ENCODE measurements at regions of chr7 and their contacts with region 1.

Region 1: DNA sequence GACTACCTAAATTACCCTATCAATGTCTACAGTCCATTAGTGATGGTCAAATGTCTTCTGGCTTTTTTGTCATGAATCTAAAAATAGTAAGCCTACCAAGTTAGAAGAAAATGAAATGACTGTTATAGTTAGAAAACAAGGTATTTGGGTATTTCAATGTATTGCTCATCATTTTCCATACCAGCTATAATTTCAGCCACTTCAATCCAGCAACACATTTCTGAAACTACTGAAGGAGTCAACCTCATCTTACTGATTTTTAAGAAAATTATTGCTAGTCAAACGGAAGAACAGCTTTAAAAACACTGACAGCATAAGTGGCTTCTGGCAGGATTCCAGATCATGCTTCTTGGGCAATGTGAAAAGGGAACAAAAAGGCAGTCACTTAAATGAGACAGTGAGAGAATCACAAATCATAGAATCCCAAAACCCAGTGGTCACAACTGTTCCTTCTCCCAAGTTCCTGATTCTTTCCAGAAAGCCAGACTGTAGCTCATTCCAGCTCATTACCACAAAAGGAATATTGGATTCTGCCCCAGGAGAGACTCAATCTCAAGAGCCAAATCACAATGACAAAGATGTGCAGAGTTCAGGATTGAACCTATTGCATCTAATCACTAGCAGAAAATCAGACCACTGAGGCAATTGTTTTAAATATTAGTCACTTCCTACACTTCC is 61.2 kb upstream of the LRRN3 start:
- DNase-seq: no peak
- H3K4me3 Mint-ChIP-seq: peak overlapping the region; percentile 63
- H3K27ac Mint-ChIP-seq: peak overlapping the region; percentile 88
- H3K4me1 Mint-ChIP-seq: peaks cover 53% of the 10 kb centered on the region
- H3K27me3 Mint-ChIP-seq: no peaks in the 10 kb centered on the region

Region 2: GRCh38 chr7:110774063-110774462 is 255.7 kb before region 1 on chr7:
- intact Hi-C with region 1: loop called (anchors 10 kb)
- DNase-seq: no peak
- H3K4me3 Mint-ChIP-seq: no peak overlapping the region
- H3K27ac Mint-ChIP-seq: no peak overlapping the region
- H3K4me1 Mint-ChIP-seq: peaks cover 8% of the 10 kb centered on the region
- H3K27me3 Mint-ChIP-seq: no peaks in the 10 kb centered on the region

Region 3: DNA sequence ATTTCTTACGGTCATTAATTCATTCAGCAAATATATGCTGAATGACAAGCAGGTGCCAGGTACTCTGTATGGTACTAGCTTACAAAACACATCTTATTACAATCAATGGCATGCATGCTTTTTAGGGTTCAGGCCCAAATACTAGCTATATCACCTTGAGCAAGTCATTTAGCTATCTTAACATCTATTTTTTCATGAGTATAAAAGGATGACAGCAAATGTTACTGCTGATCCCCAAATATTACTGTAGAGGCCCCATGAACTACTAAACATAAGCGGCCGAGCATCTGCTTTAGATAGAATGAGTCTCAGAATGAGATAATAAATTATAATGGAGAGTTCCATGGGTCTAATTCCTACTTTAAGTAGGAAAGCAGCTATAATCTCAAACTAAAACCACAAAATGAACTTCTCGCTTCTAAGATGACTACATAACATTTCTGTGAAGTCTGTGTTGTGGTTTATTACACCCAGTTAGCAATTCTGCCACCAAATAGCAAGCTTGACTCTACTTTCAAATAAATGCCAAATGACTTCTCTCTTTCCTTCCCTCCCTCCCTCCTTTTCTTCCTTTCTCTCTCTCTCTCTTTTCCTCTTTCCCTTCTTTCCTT is 52.5 kb before region 1 on chr7:
- intact Hi-C with region 1: loop called (anchors 1 kb)
- DNase-seq: no peak
- H3K4me3 Mint-ChIP-seq: no peak overlapping the region
- H3K27ac Mint-ChIP-seq: peak overlapping the region; percentile 24
- H3K4me1 Mint-ChIP-seq: peaks cover 37% of the 10 kb centered on the region
- H3K27me3 Mint-ChIP-seq: no peaks in the 10 kb centered on the region

Region 4: GRCh38 chr7:111041577-111041976 is 11.9 kb after region 1 on chr7:
- intact Hi-C with region 1: loop called (anchors 1 kb)
- DNase-seq: no peak
- H3K4me3 Mint-ChIP-seq: no peak overlapping the region
- H3K27ac Mint-ChIP-seq: peak overlapping the region; percentile 14
- H3K4me1 Mint-ChIP-seq: peaks cover 26% of the 10 kb centered on the region
- H3K27me3 Mint-ChIP-seq: no peaks in the 10 kb centered on the region

Region 5: GRCh38 chr7:111083413-111083812 is 53.7 kb after region 1 on chr7:
- intact Hi-C with region 1: loop called (anchors 1 kb)
- DNase-seq: peak; percentile 70
- H3K4me3 Mint-ChIP-seq: peak overlapping the region; percentile 64
- H3K27ac Mint-ChIP-seq: peak overlapping the region; percentile 94
- H3K4me1 Mint-ChIP-seq: peaks cover 72% of the 10 kb centered on the region
- H3K27me3 Mint-ChIP-seq: no peaks in the 10 kb centered on the region

Region 6: DNA sequence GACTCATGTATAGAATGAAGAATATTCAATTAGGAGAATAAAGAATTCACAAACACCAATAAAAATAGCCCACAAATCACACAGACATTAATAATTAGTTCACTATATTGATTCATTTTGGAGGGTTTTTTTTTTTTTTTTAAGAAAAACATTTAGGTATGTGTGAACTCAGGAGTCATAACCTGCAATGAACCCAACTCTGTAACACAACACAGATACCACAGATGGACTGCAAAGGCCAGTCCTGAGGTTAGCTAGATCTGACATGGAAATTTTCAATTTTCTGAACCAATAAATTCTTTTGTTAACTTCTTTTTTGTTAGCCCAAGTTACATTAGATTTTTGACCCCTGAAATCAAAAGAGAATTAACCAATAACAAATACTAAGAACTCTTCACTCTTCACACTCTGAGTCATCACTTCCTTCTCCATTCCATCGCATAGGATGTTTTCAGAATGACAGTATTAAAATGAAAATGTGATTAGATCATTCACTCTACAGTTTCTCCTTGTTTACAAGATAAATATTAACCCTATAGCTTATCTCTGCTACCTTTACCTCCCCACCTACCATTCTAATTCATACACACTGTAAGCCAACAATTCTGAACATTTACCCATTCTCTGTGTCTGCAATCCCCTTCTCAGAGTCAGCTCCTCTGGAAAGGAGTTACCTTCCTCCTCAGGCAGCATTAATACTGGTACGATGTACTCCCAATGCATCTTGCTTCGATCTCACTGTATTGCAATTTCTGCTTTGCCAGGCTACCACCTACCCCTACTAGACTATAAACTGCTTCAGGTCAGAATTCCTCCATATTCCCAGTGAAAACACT is 202.8 kb after region 1 on chr7:
- intact Hi-C with region 1: loop called (anchors 10 kb)
- DNase-seq: no peak
- H3K4me3 Mint-ChIP-seq: no peak overlapping the region
- H3K27ac Mint-ChIP-seq: no peak overlapping the region
- H3K4me1 Mint-ChIP-seq: peaks cover 20% of the 10 kb centered on the region
- H3K27me3 Mint-ChIP-seq: no peaks in the 10 kb centered on the region